ENCODE measurements at regions of chr16 and their contacts with region 1.

Region 1: DNA sequence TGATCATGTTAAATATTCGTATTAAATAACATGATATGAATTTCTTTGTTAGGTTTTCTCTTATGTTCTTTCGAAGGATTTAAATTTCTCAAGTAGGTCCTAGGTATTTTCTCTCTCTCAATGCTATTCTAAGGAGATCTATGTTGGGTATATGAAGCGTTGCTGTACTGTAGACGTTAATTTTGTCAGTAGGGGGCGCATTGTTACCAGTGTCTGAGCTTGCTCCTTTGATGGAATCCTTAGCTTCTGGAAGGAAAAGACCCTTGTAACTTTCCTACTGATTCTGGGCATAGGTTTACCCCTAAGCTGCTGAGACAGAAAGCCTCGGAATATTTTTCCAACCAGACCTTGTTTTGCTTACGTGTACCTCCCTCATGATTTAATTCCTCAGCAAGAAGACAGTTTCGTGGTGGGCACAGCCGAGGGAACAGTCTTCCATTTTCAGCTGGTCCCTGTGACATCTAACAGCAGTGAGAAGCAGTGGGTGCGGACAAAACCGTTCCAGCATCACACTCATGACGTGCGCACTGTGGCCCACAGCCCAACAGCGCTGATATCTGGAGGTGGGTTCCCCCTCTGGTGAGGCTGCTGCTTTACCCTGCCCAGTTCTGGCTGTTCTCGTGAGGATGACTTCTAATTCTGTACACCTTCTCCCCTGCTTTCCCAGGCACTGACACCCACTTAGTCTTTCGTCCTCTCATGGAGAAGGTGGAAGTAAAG is 17.9 kb downstream of the UTP4 start:
- DNase-seq: no peak

Region 2: GRCh38 chr16:69286941-69287713 is 136.8 kb after region 1 on chr16:
- intact Hi-C with region 1: loop called (anchors 1 kb)
- DNase-seq: no peak